Left ventricle myocardium superior (tissue), 1 donor: ENCODE measurements at regions of chr1 and their contacts with region 1.

Region 1: DNA sequence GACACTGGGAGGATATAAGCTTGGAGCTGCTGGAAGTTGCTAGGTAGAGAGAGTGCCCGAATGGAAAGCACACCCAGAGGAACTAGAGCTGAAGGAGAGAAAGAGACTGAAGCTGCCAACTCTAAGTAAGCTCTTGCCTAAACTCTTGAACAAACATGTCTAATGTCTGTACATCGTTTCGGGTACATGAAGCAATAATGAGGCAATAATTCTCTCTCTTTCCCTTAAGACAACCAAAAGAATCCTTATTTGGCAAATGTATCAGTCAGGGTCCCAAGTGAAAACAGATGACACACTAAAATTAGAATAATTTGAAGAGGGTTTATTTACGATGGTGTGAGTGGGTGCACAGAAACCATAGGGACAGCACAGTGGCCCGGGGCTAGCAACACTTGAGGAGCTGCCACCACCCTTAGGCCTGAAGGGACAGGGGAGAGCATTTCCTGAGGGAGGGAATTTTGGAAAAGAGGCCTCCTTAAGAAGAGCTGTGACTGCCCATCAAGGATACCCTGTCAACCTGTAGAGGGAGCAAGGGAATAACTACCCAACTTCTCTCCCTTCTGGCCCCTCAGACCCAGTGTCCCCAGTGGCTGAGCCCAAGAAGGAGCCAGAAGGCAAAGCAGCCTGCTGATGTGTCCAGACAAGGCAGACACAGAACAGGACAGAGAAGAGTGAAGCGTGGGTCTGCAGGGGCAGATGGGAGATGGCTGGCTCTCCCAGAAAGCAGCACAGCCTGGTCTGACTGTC is 36.1 kb upstream of the KHDRBS1 start:
- DNase-seq: no peak
- ATAC-seq: peak; percentile 79

Region 2: GRCh38 chr1:31802190-31803150 is 175.1 kb before region 1 on chr1:
- intact Hi-C with region 1: loop called (anchors 10 kb)
- DNase-seq: no peak
- ATAC-seq: no peak